HEK293T (cell line): ENCODE measurements at regions of chr4 and their contacts with region 1.

Region 1: GRCh38 chr4:78787392-78788004 is 11.3 kb downstream of the BMP2K start:
- DNase-seq: no peak

Region 2: GRCh38 chr4:78818530-78819079 is 31.1 kb after region 1 on chr4:
- CTCF ChIA-PET with region 1: no interaction called
- POLR2A ChIA-PET with region 1: no interaction called
- DNase-seq: no peak

Region 3: GRCh38 chr4:78962597-78963115 is 175.2 kb after region 1 on chr4:
- CTCF ChIA-PET with region 1: interaction called, 13 read pairs
- POLR2A ChIA-PET with region 1: no interaction called
- DNase-seq: no peak